ENCODE measurements at regions of chr5 and their contacts with region 1.

Region 1: DNA sequence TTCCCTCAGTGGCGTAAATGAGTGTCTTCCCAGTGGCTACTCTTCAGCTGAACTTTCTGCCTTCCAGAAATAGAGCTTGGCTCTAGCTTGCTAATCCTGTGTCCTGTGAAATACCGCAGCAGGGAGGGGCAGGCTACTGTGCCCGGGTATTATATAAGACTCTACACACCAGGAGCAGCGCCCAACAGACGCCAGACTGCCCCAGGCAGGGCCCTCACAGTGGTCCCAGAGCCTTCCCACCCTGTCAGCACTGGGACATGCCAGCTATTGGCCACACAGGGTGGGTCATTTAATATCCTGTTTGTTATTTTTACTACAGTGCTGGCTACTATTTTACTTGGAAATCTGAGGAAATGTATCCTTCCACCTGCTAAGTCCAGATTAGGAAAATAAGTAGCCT is 121.0 kb downstream of the FEM1C start:
- DNase-seq: peak; percentile 86

Region 2: DNA sequence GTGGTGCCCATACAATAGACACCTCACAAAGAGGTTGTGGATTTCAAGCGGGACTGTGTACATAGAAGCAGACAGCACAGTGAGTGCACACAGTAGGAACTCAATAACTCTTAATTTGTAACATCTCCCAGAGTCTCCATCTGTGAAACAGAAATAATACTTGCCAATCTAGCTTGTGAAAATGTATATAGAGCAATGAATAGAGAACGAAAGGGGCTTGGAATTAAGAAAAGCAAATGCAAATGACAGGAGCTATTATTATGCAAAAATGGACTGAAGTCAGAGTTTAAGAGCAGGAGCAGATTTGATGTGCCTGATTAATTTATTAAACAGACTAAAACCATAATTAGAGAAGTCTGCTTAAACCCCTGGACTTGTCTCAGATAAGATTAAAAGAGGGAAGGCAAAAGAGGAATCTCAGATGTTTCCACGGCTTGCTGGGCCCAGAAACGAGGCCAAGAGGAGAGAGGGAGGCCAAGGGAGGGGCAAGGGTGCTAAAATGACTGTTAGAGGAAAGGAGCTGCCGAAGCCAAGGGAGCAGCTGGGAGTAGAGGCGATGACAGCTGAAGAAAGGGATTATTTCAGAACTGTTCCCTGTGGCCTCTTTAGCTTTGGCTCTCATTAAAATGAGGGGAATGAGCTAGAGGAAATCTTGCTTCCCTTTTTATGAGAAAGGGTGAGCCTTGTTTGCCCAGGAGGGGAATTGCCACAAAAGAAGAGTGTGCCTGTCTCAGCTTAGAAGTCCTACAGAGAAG is 48.9 kb after region 1 on chr5:
- intact Hi-C with region 1: no loop called
- DNase-seq: no peak

Region 3: GRCh38 chr5:115501464-115502210 is 78.1 kb after region 1 on chr5:
- intact Hi-C with region 1: loop called (anchors 2 kb)
- DNase-seq: no peak